ENCODE measurements at regions of chr11 and their contacts with region 1.

Region 1: DNA sequence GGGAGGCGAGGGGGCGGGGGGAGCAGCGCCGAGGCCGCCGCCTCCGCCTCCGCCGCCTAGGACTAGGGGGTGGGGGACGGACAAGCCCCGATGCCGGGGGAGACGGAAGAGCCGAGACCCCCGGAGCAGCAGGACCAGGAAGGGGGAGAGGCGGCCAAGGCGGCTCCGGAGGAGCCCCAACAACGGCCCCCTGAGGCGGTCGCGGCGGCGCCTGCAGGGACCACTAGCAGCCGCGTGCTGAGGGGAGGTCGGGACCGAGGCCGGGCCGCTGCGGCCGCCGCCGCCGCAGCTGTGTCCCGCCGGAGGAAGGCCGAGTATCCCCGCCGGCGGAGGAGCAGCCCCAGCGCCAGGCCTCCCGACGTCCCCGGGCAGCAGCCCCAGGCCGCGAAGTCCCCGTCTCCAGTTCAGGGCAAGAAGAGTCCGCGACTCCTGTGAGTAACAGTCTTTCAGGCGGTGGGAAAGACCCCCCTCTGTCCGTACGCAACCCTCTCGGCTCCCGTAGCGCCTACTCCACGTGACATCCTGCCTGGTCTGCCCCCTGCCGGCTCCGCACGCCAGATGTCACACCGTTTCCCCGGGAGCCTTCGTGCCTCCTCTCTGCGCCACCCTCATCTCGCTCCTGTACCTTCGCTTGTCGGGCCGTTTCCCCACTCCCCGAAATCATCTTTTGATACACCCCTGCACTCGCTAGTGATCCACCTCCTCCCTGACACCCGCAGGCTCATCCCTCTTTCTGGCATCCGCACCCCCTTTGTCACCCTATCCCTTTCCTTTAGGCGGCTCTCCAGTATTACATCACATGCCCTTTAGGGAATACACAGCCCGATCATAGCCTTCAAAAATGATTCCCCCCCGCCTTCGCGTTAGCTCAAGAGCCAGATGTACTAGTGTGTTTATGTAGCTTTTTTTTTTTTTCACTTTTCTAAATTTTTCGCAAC is 598 bp downstream of the ZFP91 start:
- DNase-seq: peak; percentile 95
- H3K4me3 Mint-ChIP-seq: peak overlapping the region; percentile 87
- H3K27ac Mint-ChIP-seq: peak overlapping the region; percentile 100
- H3K4me1 Mint-ChIP-seq: peaks cover 46% of the 10 kb centered on the region
- H3K27me3 Mint-ChIP-seq: no peaks in the 10 kb centered on the region

Region 2: GRCh38 chr11:57530596-57531507 is 1048.6 kb before region 1 on chr11 and contains the start of gene TIMM10:
- CTCF ChIA-PET with region 1: no interaction called
- POLR2A ChIA-PET with region 1: no interaction called
- intact Hi-C with region 1: loop called (anchors 1 kb)
- DNase-seq: peak; percentile 97
- H3K4me3 Mint-ChIP-seq: peak within 1 kb of the TSS; percentile 93
- H3K27ac Mint-ChIP-seq: peak within 1 kb of the TSS; percentile 80
- H3K4me1 Mint-ChIP-seq: peaks cover 35% of the 10 kb centered on the region
- H3K27me3 Mint-ChIP-seq: no peaks in the 10 kb centered on the region
- total RNA-seq, gene TIMM10: 131 to 134 TPM

Region 3: DNA sequence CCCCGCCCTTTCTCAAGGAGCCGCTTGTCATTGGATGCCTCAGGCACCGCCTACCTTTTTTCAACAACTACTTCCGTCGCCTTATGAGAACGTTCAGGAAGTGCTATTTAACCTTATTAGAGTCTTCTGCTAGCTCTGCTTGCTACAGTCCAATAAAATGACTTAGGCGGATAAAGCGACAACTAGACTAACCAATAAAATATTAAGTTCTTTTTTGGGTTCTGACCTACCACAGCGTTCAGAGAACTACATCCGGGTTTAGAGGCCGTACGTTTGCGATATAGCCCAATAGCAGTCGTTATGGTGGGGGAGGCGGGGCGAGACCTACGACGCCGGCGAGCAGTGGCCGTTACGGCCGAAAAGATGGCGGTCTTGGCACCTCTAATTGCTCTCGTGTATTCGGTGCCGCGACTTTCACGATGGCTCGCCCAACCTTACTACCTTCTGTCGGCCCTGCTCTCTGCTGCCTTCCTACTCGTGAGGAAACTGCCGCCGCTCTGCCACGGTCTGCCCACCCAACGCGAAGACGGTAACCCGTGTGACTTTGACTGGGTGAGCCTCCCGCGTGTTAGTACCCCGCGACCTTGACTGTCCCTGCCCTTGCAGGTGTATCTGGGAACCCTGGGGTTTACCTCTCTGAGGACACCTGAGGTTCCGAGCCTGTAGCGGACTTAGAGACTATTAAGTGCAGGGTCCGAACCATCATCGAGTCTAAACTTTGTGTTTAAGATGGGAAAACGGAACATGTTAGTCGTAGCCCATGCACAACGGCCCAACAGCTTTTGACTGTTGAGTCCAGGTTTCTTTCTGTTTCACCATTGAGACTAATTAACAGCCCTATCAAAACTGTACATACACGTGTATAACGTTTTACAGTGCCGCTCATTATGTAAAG is 867.0 kb before region 1 on chr11 and contains the start of gene TMX2:
- CTCF ChIA-PET with region 1: no interaction called
- POLR2A ChIA-PET with region 1: no interaction called
- intact Hi-C with region 1: loop called (anchors 1 kb)
- DNase-seq: peak; percentile 94
- H3K4me3 Mint-ChIP-seq: peak within 1 kb of the TSS; percentile 94
- H3K27ac Mint-ChIP-seq: peak within 1 kb of the TSS; percentile 89
- H3K4me1 Mint-ChIP-seq: peaks cover 53% of the 10 kb centered on the region
- H3K27me3 Mint-ChIP-seq: no peaks in the 10 kb centered on the region
- total RNA-seq, gene TMX2: 54.9 to 57.2 TPM

Region 4: DNA sequence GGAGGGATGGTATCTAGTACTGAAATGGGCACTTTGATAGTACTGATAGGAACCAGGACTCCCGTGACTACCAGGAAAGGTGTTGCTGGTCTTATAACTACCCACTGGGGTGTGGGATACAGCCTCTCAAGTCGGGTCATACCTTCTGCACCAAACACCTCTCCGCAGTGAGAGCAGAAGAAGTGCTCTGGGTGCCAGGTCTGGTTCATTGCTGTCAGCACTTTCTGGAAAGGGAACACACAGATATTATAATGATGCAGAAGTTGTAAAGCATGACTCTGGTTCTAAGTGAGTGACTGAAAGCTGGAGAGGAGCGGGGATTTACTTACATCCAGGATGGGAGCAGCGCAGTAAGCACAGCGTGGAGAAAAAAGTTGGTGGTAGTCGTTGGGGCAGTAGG is 29.8 kb before region 1 on chr11:
- CTCF ChIA-PET with region 1: no interaction called
- POLR2A ChIA-PET with region 1: no interaction called
- intact Hi-C with region 1: no loop called
- DNase-seq: no peak
- H3K4me3 Mint-ChIP-seq: no peak overlapping the region
- H3K27ac Mint-ChIP-seq: no peak overlapping the region
- H3K4me1 Mint-ChIP-seq: peaks cover 5% of the 10 kb centered on the region
- H3K27me3 Mint-ChIP-seq: no peaks in the 10 kb centered on the region

Region 5: GRCh38 chr11:58592760-58593472 is 13.5 kb after region 1 on chr11:
- CTCF ChIA-PET with region 1: interaction called, 7 read pairs
- POLR2A ChIA-PET with region 1: interaction called, 20 read pairs
- intact Hi-C with region 1: loop called (anchors 1 kb)
- DNase-seq: peak; percentile 76
- H3K4me3 Mint-ChIP-seq: no peak overlapping the region
- H3K27ac Mint-ChIP-seq: peak overlapping the region; percentile 45
- H3K4me1 Mint-ChIP-seq: peaks cover 73% of the 10 kb centered on the region
- H3K27me3 Mint-ChIP-seq: no peaks in the 10 kb centered on the region

Region 6: DNA sequence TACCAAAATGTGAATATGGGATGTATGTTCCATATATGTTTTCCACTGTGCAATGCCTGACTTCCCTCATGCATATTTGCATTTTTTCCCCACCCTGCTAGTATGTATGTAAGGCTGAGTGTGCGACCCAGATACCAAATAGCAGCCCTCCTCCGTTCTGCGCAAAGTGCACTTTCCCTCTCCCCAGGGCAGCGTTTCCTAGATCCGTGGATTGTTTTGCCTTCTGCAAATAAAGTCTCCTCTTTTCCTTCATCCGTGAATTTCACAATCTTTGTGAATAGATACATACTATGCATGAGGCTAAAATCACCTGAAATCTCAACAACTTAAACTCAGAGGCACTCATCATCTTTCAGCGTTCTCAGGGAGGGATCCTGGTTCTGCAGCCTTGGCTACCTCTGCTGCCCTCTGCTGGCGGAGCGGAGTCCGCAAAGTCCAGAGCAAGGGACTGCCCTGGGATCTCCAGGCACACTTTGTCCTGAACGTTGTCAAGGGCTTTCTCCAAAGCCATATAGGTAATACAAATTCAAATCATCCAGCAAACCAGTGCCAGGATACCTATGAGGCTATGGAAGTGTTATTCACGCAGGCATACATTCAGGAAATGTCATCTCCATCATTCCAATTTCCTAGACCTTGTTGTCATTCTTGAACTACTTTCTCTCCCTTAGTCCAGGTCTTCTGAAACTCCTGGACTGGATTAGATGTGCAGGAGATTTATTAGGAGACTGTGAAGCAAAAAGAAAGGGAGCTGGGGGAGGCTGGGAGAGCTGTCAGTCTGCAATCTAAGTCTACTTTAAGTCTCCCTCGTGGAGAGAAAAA is 96.1 kb after region 1 on chr11:
- CTCF ChIA-PET with region 1: interaction called, 9 read pairs
- POLR2A ChIA-PET with region 1: interaction called, 3 read pairs
- intact Hi-C with region 1: loop called (anchors 1 kb)
- DNase-seq: peak; percentile 82
- H3K4me3 Mint-ChIP-seq: no peak overlapping the region
- H3K27ac Mint-ChIP-seq: no peak overlapping the region
- H3K4me1 Mint-ChIP-seq: no peaks in the 10 kb centered on the region
- H3K27me3 Mint-ChIP-seq: peaks cover 4% of the 10 kb centered on the region

Region 7: DNA sequence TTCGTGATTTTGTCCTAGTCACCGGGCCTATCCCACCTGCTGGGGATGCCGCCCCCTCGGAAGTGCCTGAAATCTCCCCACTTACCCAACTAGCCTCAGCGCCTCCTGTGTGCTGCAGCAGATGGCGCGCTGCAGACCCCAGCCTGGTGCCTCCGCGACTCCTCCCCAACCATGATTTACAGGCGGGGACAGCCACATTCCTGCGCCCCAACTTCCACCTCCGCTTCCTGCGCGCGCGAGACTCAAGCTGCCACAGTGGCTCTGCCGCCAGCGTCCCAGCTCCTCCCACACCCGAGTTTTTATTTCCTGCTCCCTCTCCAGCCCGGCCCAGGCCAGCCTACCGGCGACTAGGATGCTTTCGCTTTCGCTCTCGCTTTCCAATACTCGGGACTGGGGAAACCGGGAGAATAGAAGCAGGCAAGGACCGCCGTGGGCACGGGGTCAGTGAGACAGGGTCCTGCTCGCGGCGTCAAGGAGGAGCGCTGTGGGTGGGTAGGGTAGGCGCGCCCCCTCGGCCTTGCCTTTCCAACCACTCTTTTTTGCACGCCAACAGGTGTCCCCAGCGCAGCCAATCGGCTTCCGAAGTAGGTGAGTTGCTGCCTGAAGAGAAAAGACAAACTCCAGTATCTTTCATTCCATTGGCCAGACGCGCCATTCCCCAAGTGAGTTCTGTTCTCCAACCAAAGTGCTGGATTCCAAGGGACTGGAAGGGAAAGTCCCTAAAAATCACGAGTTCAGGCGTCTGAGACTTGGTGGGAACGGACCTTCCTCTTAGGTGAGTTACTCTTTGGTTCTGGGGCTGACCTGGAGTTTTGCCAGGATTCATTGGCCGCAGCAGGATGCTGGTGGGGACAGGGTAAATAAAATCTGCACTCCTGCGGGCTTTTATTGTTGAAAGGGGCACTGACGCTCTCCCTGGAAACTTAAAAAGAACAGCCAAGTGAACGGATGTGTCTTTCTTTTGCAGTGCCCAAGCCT is 563.4 kb after region 1 on chr11 and contains the start of gene FAM111A:
- CTCF ChIA-PET with region 1: interaction called, 3 read pairs
- POLR2A ChIA-PET with region 1: no interaction called
- intact Hi-C with region 1: loop called (anchors 2 kb)
- DNase-seq: peak; percentile 90
- H3K4me3 Mint-ChIP-seq: peak within 1 kb of the TSS; percentile 94
- H3K27ac Mint-ChIP-seq: peak within 1 kb of the TSS; percentile 93
- H3K4me1 Mint-ChIP-seq: peaks cover 50% of the 10 kb centered on the region
- H3K27me3 Mint-ChIP-seq: no peaks in the 10 kb centered on the region
- total RNA-seq, gene FAM111A: 87.6 to 87.8 TPM

Region 8: DNA sequence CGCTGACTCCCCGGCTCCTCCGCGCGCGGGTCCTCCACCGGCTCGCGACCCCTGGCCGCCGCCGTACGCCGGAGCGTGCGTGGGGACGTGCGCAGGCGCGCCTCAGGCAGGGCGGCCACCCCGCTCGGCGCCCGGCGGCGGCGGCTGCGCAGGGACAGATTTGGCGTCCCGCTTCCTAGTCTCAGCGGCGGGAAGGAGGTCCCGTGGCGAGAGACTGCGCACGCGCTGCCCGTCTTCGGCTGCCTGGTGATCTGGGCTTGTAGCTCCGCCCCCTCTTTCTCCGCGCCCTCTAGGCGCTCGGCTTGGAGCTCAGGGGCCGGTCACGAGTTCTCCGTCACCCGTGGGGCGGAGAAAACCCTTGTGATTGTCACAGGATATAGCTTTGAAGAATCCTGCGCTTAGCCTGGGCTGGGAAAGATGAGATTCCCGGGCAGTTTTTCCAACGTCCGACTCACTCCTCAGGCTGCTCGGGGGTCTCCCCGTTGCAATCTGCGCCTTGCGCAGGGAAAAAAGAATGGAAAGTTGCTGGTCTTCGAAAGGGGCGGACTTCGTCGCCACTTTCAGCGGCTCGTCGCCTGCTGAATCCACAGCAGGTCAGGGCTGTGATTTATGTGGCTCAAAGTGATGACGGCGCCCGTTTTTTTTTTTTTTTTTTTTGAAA is 1089.6 kb after region 1 on chr11 and contains the start of gene PATL1:
- CTCF ChIA-PET with region 1: no interaction called
- POLR2A ChIA-PET with region 1: no interaction called
- intact Hi-C with region 1: loop called (anchors 2 kb)
- DNase-seq: peak; percentile 99
- H3K4me3 Mint-ChIP-seq: peak within 1 kb of the TSS; percentile 95
- H3K27ac Mint-ChIP-seq: peak within 1 kb of the TSS; percentile 97
- H3K4me1 Mint-ChIP-seq: peaks cover 39% of the 10 kb centered on the region
- H3K27me3 Mint-ChIP-seq: no peaks in the 10 kb centered on the region
- total RNA-seq, gene PATL1: 58.3 to 62.3 TPM

Measured in activated CD4-positive, alpha-beta memory T cell treated with anti-CD3 and anti-CD28 coated beads for 36 hours (primary cell).